ENCODE measurements at regions of chr7 and their contacts with region 1.

Region 1: GRCh38 chr7:131107337-131108211 is 220.1 kb upstream of the MKLN1 start:
- DNase-seq: peak; percentile 53 to 90 (median 84)
- ATAC-seq: peak; percentile 38
- H3K4me3 ChIP-seq: peak overlapping the region; percentile 98
- H3K4me3 Mint-ChIP-seq: peak overlapping the region; percentile 86 to 100 (median 97)
- H3K27ac ChIP-seq: peak overlapping the region; percentile 98
- H3K27ac Mint-ChIP-seq: peak overlapping the region; percentile 95 to 100 (median 98)
- H3K4me1 ChIP-seq: peaks cover 42 to 46% of the 10 kb centered on the region in 2 donors
- H3K4me1 Mint-ChIP-seq: peaks cover 48 to 69% (median 58%) of the 10 kb centered on the region in 7 donors
- H3K27me3 ChIP-seq: no peaks in the 10 kb centered on the region
- H3K27me3 Mint-ChIP-seq: peaks cover 0 to 5% (median 0%) of the 10 kb centered on the region in 5 donors

Region 2: DNA sequence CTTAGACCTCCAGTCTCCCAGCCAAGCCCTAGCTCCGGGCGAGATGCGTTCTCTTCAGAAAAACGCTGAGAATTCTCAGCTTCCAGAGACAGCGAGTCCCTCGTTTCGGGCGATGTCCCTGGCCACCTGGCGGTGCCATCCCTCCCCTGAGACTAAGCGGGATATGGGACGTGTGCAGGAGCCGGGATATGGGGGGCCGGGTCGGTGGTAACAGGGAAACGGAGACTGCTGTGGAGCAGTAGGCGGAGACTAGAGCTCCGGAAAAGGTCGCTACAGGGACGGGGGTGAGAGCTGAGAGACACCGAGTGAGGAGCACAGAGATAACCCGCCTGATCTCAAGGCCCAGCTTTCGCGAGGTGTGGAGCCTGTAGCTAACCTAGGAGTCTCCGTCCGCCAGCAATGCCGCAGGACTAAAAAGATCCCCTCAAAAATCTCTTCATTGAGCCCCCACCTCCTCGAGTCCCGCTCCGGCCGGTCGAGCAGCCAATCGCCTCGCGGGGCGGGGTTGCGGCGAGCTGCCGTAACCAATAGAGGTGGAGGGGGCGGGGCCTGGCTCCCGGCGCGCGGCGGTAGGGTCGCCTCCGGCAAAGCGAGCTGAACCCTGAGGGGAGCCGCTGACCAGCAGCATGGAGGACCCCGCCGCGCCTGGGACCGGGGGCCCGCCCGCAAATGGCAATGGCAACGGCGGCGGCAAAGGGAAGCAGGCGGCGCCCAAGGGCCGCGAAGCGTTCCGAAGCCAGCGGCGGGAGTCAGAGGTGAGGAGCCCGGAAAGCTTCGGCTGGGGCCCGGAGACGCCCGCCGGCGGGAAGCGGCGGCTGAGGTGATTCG is 1673.5 kb before region 1 on chr7 and contains the start of gene STRIP2:
- CTCF ChIA-PET with region 1: no interaction called
- POLR2A ChIA-PET with region 1: no interaction called
- intact Hi-C with region 1: loop called in 1 of 2 experiments (anchors 5 kb)
- DNase-seq: peak; percentile 77 to 97 (median 86)
- ATAC-seq: peak; percentile 98
- H3K4me3 ChIP-seq: peak within 1 kb of the TSS; percentile 85
- H3K4me3 Mint-ChIP-seq: peak within 1 kb of the TSS; percentile 90 to 98 (median 93)
- H3K27ac ChIP-seq: peak within 1 kb of the TSS; percentile 52
- H3K27ac Mint-ChIP-seq: peak within 1 kb of the TSS; percentile 11 to 91 (median 69)
- H3K4me1 ChIP-seq: peaks cover 6 to 14% of the 10 kb centered on the region in 2 donors
- H3K4me1 Mint-ChIP-seq: peaks cover 9 to 43% (median 17%) of the 10 kb centered on the region in 7 donors
- H3K27me3 ChIP-seq: peaks cover 4 to 6% of the 10 kb centered on the region in 2 donors
- H3K27me3 Mint-ChIP-seq: peaks cover 8 to 34% (median 29%) of the 10 kb centered on the region in 5 donors
- total RNA-seq, gene STRIP2: 0.14 to 21.4 (median 0.27) TPM in 4 of 5 experiments, not detected in the other

Region 3: DNA sequence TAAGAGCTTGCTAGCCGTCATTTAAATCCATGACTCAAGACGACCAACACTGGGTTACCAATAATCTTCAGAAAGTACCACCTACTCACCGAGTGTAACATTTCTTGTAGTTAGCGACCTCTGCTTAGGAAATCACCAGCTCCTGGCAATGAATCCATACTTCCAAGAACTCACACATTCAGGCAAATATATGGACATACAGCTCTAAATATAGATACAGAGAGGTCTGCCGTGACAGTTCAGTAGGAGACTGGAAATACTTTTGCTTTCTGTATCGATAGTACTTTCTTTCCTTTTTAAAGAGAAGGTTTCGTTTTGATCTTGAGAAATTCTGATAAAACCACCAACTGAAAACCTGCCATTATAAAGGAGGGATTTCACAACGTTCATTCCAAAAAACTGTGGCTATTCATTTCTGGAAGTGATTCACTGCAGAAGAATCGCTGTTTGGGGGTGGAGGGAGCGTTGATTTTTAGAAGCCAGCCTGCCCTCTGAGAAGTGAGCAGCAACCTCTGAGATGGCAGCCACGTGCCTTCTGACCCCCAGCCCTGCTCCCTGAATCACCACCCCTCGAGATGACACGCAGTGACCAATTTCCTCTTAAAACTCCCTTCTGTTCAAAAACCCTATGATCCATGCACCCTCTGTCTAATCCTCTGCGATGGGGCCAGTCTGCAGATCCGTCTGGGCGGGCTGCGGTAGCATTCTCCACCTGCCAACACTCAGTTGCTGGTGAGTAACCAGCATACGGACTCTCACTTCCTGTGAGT is 194.5 kb before region 1 on chr7:
- CTCF ChIA-PET with region 1: no interaction called
- POLR2A ChIA-PET with region 1: interaction called, 4 read pairs
- intact Hi-C with region 1: loop called (anchors 2 kb)
- DNase-seq: peak; percentile 49 to 91 (median 75)
- ATAC-seq: peak; percentile 90
- H3K4me3 ChIP-seq: peak overlapping the region; percentile 66
- H3K4me3 Mint-ChIP-seq: peak overlapping the region; percentile 80 to 100 (median 94)
- H3K27ac ChIP-seq: peak overlapping the region; percentile 88
- H3K27ac Mint-ChIP-seq: peak overlapping the region; percentile 86 to 98 (median 95)
- H3K4me1 ChIP-seq: peaks cover 46 to 73% of the 10 kb centered on the region in 2 donors
- H3K4me1 Mint-ChIP-seq: peaks cover 53 to 93% (median 89%) of the 10 kb centered on the region in 7 donors
- H3K27me3 ChIP-seq: no peaks in the 10 kb centered on the region
- H3K27me3 Mint-ChIP-seq: no peaks in the 10 kb centered on the region

Region 4: GRCh38 chr7:131007394-131008330 is 99.9 kb before region 1 on chr7:
- CTCF ChIA-PET with region 1: no interaction called
- POLR2A ChIA-PET with region 1: no interaction called
- intact Hi-C with region 1: loop called in 1 of 2 experiments (anchors 5 kb)
- DNase-seq: peak in 7 of 9 donors; percentile 51 to 69 (median 63)
- ATAC-seq: peak; percentile 72
- H3K4me3 ChIP-seq: no peak overlapping the region
- H3K4me3 Mint-ChIP-seq: peak overlapping the region in 9 of 10 donors; percentile 52 to 87 (median 69)
- H3K27ac ChIP-seq: peak overlapping the region; percentile 67
- H3K27ac Mint-ChIP-seq: peak overlapping the region; percentile 83 to 97 (median 88)
- H3K4me1 ChIP-seq: peaks cover 60 to 64% of the 10 kb centered on the region in 2 donors
- H3K4me1 Mint-ChIP-seq: peaks cover 68 to 94% (median 87%) of the 10 kb centered on the region in 7 donors
- H3K27me3 ChIP-seq: no peaks in the 10 kb centered on the region
- H3K27me3 Mint-ChIP-seq: no peaks in the 10 kb centered on the region

Region 5: GRCh38 chr7:131090886-131091692 is 16.5 kb before region 1 on chr7:
- CTCF ChIA-PET with region 1: interaction called, 4 read pairs
- POLR2A ChIA-PET with region 1: interaction called, 10 read pairs
- intact Hi-C with region 1: loop called in 1 of 2 experiments (anchors 1 kb)
- DNase-seq: no peak
- ATAC-seq: peak; percentile 18
- H3K4me3 ChIP-seq: no peak overlapping the region
- H3K4me3 Mint-ChIP-seq: peak overlapping the region in 9 of 10 donors; percentile 1 to 55 (median 23)
- H3K27ac ChIP-seq: no peak overlapping the region
- H3K27ac Mint-ChIP-seq: peak overlapping the region in 7 of 9 donors; percentile 8 to 81 (median 60)
- H3K4me1 ChIP-seq: peaks cover 22 to 39% of the 10 kb centered on the region in 2 donors
- H3K4me1 Mint-ChIP-seq: peaks cover 20 to 90% (median 73%) of the 10 kb centered on the region in 7 donors
- H3K27me3 ChIP-seq: no peaks in the 10 kb centered on the region
- H3K27me3 Mint-ChIP-seq: no peaks in the 10 kb centered on the region

Region 6: DNA sequence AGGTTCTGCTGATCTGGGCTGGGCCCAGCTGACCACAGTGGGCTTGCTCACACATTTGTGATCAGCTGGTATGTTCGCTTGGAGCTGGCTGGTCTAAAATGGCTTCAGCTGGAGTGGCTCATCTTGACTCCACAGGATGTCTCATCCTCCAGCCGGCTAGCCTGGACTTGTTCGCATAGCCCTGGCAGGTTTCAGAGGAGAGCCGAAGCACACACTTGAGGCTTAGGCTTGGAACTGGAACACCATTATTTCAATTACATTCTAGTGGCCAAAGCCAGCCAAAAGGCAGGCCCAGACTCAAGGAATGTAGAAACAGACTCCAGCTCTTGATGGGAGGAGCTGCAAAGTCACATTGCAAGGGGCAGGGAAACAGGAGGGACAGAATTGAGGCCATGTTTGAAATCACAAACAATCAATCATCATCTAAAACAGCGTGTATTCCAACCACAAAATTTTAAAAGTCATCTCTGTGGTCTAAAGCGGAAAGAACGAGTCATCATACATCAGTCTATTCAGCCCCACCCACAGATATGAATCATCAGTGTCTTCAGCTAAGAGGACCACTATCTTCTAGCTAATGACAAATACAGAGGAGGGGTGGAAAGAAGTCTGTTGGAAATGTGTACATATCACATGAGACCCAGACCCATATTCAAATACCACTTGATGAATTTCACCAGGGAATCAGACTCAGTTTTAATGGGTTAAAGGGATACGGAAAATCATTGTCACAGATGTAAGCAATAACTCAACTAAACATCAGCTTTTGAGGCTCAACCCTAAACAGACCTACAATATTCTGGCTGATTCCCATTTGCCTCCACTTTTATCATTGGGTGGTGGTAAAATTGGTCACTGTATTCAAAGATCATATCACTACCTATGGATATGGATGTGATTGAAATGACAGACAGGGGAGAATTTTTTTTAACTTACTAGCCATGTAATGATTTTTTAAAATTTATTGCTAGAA is 81.1 kb after region 1 on chr7:
- CTCF ChIA-PET with region 1: no interaction called
- POLR2A ChIA-PET with region 1: interaction called, 6 read pairs
- intact Hi-C with region 1: loop called (anchors 1 kb)
- DNase-seq: peak; percentile 5 to 62 (median 29)
- ATAC-seq: peak; percentile 95
- H3K4me3 ChIP-seq: no peak overlapping the region
- H3K4me3 Mint-ChIP-seq: peak overlapping the region in 2 of 10 donors; percentile 27 to 56
- H3K27ac ChIP-seq: no peak overlapping the region
- H3K27ac Mint-ChIP-seq: peak overlapping the region in 4 of 9 donors; percentile 15 to 86 (median 52)
- H3K4me1 ChIP-seq: peaks cover 15 to 28% of the 10 kb centered on the region in 2 donors
- H3K4me1 Mint-ChIP-seq: peaks cover 5 to 51% (median 16%) of the 10 kb centered on the region in 7 donors
- H3K27me3 ChIP-seq: no peaks in the 10 kb centered on the region
- H3K27me3 Mint-ChIP-seq: no peaks in the 10 kb centered on the region

Region 7: DNA sequence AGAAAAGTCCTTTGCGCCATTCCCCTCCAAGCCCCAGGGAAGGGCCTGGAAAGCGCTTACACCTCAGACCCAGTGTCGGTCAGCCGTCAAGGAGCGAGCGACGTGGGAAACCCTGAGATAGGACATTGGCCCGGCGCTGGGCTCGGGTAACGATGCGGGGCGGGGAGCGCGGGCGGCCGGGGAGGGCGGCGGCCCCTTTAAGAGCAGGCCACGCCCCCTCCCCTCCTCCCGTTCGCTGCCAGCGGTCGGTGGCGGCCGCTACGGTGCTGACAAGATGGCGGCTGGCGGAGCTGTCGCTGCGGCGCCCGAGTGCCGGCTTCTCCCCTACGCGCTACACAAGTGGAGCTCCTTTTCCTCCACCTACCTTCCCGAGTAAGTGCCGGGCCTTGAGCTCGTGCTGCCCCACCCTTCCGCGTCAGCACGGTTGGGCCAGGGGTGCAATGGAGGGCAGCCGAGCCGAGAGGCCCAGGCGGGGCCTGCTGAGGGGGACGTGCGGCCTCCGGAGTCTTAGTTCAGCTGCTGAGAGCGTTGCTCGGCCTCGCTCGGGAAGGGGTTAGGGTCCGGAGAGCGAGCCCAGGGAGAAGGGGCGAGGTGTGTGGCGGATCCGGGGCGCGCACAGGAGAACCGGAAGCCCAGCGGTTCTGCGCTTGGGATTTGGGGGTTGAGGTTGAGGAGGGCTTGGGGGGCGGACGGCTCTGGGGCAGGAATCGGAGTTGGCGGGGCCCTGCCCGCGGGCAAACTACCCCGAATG is 220.2 kb after region 1 on chr7 and contains the start of gene MKLN1:
- CTCF ChIA-PET with region 1: no interaction called
- POLR2A ChIA-PET with region 1: interaction called, 22 read pairs
- intact Hi-C with region 1: loop called (anchors 1 kb)
- DNase-seq: peak; percentile 82 to 91 (median 86)
- ATAC-seq: peak; percentile 99
- H3K4me3 ChIP-seq: peak within 1 kb of the TSS; percentile 88
- H3K4me3 Mint-ChIP-seq: peak within 1 kb of the TSS; percentile 88 to 100 (median 94)
- H3K27ac ChIP-seq: peak within 1 kb of the TSS; percentile 94
- H3K27ac Mint-ChIP-seq: peak within 1 kb of the TSS; percentile 86 to 99 (median 97)
- H3K4me1 ChIP-seq: peaks cover 26 to 43% of the 10 kb centered on the region in 2 donors
- H3K4me1 Mint-ChIP-seq: peaks cover 35 to 85% (median 71%) of the 10 kb centered on the region in 7 donors
- H3K27me3 ChIP-seq: no peaks in the 10 kb centered on the region
- H3K27me3 Mint-ChIP-seq: no peaks in the 10 kb centered on the region
- total RNA-seq, gene MKLN1: 42.0 to 69.8 (median 59.3) TPM

Measured in naive thymus-derived CD4-positive, alpha-beta T cell (primary cell).